Calu3 (cell line): ENCODE measurements at regions of chr11 and their contacts with region 1.

Region 1: DNA sequence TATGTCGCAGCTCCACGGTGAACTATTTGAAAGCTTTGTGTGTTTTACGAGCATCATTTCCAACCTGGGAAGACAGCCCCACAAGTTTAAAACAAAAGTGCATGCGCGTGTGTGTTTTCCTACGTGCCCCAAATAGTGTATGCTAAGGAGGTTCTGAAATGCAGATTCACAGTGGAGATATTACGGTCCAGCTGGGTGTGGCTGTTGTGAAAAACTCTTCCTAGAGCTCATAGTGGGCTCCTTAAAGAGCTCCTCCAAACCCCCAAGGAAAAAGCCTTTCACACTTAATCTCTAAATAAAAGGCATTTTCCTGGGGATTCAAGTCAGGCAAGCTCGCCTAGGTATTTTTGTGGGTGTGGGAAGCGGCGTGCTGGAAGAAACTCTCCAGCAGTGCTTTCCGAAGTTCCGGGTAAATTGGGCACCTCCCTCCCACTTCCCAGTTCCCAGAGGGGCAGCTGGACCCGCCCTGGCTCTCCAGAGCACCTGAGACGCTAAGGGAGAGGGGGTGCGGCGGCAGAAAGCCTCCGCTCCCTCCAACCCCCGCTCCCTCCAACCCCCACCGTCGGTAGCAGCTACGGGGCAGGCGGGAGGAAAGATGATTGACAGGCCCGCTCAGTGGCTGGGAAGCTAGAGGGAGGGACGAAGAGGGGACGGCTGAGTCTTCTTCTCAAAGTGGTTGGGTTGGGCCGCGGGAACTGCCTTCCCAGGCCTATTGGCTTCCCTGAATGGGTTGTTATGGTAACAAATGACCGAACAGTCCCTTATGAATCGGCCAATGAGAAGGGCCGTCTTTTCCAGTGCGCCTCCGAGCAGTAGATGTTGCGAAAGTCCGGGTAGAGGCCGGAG is 558 bp upstream of the PCF11 start:
- DNase-seq: peak; percentile 94
- H3K4me3 Mint-ChIP-seq: peak overlapping the region; percentile 96
- H3K27ac Mint-ChIP-seq: peak overlapping the region; percentile 93
- H3K4me1 Mint-ChIP-seq: no peaks in the 10 kb centered on the region
- H3K27me3 Mint-ChIP-seq: no peaks in the 10 kb centered on the region
- CTCF ChIP-seq: no peak

Region 2: GRCh38 chr11:82900277-82901164 is 255.9 kb before region 1 on chr11 and contains the start of gene PRCP:
- CTCF ChIA-PET with region 1: no interaction called
- intact Hi-C with region 1: loop called (anchors 10 kb)
- DNase-seq: peak; percentile 89
- H3K4me3 Mint-ChIP-seq: peak within 1 kb of the TSS; percentile 82
- H3K27ac Mint-ChIP-seq: peak within 1 kb of the TSS; percentile 73
- H3K4me1 Mint-ChIP-seq: peaks cover 23% of the 10 kb centered on the region
- H3K27me3 Mint-ChIP-seq: no peaks in the 10 kb centered on the region
- CTCF ChIP-seq: no peak
- total RNA-seq, gene PRCP: 22.0 and 22.7 TPM in 2 replicates

Region 3: GRCh38 chr11:83044958-83045712 is 111.2 kb before region 1 on chr11:
- CTCF ChIA-PET with region 1: interaction called, 12 read pairs
- intact Hi-C with region 1: no loop called
- DNase-seq: no peak
- H3K4me3 Mint-ChIP-seq: no peak overlapping the region
- H3K27ac Mint-ChIP-seq: no peak overlapping the region
- H3K4me1 Mint-ChIP-seq: no peaks in the 10 kb centered on the region
- H3K27me3 Mint-ChIP-seq: no peaks in the 10 kb centered on the region
- CTCF ChIP-seq: no peak

Region 4: DNA sequence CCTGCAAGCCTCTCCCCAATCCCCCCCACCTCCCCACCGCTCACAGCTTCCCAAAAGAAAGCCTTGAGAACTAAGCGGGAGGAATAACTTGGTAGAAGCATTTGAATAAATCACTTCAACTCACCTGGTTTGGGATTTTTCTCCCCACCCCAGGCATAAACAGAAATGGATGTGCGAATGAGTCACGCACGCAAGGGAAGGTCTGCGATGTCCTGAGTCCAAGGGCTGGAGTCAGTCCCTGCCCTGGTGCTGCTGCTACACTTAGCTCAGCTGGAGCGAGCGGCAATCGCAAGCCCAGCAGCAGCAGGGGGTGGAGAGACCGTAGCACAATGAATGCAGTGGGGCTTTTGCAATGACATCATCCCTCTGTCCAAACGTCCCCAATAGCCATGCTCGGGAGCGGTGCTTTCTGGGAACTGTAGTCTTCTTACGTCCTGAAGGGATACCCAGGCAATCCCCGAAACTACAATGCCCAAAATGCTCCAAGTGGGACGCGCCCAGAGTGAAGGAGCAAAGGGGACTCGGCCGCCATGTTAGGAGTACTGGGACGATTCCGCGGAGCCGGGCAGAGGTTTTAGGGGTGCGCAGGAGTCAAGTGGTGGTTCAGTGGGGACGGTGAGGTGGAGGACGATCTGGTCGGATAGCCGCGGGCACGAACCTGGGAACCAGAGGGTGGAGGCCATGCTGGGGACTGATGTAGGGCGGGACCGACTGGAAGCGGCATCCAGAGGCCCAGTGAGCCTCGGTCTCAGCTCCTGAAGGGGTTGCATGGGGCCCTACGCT is 84.6 kb before region 1 on chr11 and contains the start of gene RAB30:
- CTCF ChIA-PET with region 1: no interaction called
- intact Hi-C with region 1: loop called (anchors 5 kb)
- DNase-seq: peak; percentile 88
- H3K4me3 Mint-ChIP-seq: no peak within 1 kb of the TSS
- H3K27ac Mint-ChIP-seq: no peak within 1 kb of the TSS
- H3K4me1 Mint-ChIP-seq: no peaks in the 10 kb centered on the region
- H3K27me3 Mint-ChIP-seq: no peaks in the 10 kb centered on the region
- CTCF ChIP-seq: no peak
- total RNA-seq, gene RAB30: 1.5 and 2.2 TPM in 2 replicates

Region 5: GRCh38 chr11:83092488-83093384 is 63.6 kb before region 1 on chr11:
- CTCF ChIA-PET with region 1: interaction called, 3 read pairs
- intact Hi-C with region 1: loop called (anchors 5 kb)
- DNase-seq: peak; percentile 50
- H3K4me3 Mint-ChIP-seq: no peak overlapping the region
- H3K27ac Mint-ChIP-seq: no peak overlapping the region
- H3K4me1 Mint-ChIP-seq: peaks cover 10% of the 10 kb centered on the region
- H3K27me3 Mint-ChIP-seq: no peaks in the 10 kb centered on the region
- CTCF ChIP-seq: no peak

Region 6: DNA sequence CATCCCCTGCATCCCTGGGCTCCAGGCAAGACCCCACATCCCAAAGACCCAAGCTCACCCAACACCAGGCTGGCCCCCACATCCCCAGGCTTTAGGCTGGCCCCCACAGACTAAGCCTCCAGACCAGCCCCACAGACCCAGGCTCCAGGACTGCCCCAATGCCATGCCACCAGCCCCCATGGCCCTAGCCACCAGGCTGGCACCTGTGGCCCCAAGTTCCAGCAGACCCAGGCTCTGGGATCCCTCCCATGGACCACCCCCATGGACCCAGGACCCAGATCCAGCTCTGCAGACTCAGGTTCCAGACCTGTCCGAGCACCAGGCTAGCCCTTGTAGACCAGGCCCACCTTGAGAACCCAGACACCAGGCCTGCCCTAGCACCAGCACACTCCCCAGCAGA is 27.7 kb before region 1 on chr11:
- CTCF ChIA-PET with region 1: no interaction called
- intact Hi-C with region 1: no loop called
- DNase-seq: no peak
- H3K4me3 Mint-ChIP-seq: no peak overlapping the region
- H3K27ac Mint-ChIP-seq: no peak overlapping the region
- H3K4me1 Mint-ChIP-seq: peaks cover 11% of the 10 kb centered on the region
- H3K27me3 Mint-ChIP-seq: no peaks in the 10 kb centered on the region
- CTCF ChIP-seq: no peak